HepG2 (cell line): ENCODE measurements at regions of chr18 and their contacts with region 1.

Region 1: DNA sequence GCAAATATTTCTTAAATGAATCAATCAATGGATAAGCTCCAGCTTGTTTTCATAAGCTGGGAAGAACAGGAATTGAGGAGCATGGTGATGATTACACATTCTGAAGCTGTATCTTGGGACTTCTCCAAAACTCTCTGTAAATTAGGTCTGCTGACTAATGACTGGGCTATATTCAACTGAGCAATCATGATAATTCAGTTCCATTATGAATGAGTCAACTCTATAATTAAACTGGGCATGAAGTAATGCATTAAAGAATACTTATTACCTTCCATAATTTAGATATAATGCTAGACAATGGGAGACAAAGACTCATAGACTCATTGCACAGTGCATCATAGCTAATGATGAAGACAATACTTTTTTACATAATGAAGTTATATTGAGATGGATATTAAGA is 207.4 kb downstream of the CBLN2 start:
- DNase-seq: no peak
- ATAC-seq: no peak
- H3K4me3 ChIP-seq: no peak overlapping the region
- H3K27ac ChIP-seq: no peak overlapping the region
- H3K4me1 ChIP-seq: no peaks in the 10 kb centered on the region
- H3K27me3 ChIP-seq: no peaks in the 10 kb centered on the region
- CTCF ChIP-seq: no peak
- EP300 ChIP-seq: no peak
- POLR2A ChIP-seq: no peak
- RAD21 ChIP-seq: no peak

Region 2: DNA sequence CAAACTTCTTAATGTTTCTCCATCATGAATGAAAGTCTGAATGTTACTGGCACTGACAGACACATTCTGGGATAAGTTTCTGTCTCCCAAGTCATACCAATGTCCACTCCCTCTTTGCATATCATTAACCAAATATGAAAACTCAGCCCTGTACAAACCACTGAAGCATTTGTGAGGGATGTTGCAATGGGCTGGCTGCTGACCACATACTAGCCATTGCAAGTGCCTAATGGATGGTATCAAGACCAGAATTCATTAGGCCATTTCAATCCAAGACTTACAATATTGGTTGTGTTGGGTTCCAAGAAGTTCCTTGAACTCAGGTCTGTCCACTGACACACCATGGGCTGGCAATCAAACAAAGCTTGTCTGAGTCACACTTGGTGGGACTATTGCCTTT is 133.6 kb after region 1 on chr18:
- CTCF ChIA-PET with region 1: no interaction called
- POLR2A ChIA-PET with region 1: no interaction called
- in situ Hi-C with region 1: no loop called
- intact Hi-C with region 1: loop called (anchors 10 kb)
- DNase-seq: no peak
- ATAC-seq: no peak
- H3K4me3 ChIP-seq: no peak overlapping the region
- H3K27ac ChIP-seq: no peak overlapping the region
- H3K4me1 ChIP-seq: no peaks in the 10 kb centered on the region
- H3K27me3 ChIP-seq: no peaks in the 10 kb centered on the region
- CTCF ChIP-seq: no peak
- EP300 ChIP-seq: no peak
- POLR2A ChIP-seq: no peak
- RAD21 ChIP-seq: no peak